K562 (cell line): ENCODE measurements at regions of chr5 and their contacts with region 1.

Region 1: DNA sequence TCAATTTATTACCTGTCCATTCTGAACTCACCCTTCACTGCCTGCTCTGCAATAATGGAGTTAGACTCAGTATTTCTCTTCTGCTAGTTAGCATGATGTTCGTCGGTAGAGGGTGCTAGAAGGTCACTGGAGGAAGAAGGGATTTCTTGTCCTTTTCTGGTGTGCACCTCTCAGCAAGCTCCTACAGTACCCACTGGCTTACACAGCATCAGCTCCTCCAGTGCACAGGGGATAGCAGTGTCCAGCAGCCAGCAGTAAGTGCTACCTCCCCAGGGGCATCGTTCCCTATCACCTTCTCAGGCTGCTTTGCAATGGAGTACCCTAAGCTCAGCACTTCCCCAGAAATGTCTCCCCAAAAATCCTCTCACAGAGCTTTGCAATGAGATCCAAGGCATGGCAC is 45.9 kb upstream of the APC start:
- DNase-seq: peak; percentile 44 to 82 (median 56)
- ATAC-seq: peak; percentile 86
- H3K4me3 ChIP-seq: no peak overlapping the region
- H3K27ac ChIP-seq: no peak overlapping the region
- H3K4me1 ChIP-seq: peaks cover 0 to 33% of the 10 kb centered on the region in 2 experiments; a peak in 3 of 5 replicates
- H3K27me3 ChIP-seq: no peaks in the 10 kb centered on the region
- CTCF ChIP-seq: peak; percentile 74 to 83 (median 79)
- EP300 ChIP-seq: no peak
- POLR2A ChIP-seq: no peak
- RAD21 ChIP-seq: peak; percentile 58 to 91

Region 2: DNA sequence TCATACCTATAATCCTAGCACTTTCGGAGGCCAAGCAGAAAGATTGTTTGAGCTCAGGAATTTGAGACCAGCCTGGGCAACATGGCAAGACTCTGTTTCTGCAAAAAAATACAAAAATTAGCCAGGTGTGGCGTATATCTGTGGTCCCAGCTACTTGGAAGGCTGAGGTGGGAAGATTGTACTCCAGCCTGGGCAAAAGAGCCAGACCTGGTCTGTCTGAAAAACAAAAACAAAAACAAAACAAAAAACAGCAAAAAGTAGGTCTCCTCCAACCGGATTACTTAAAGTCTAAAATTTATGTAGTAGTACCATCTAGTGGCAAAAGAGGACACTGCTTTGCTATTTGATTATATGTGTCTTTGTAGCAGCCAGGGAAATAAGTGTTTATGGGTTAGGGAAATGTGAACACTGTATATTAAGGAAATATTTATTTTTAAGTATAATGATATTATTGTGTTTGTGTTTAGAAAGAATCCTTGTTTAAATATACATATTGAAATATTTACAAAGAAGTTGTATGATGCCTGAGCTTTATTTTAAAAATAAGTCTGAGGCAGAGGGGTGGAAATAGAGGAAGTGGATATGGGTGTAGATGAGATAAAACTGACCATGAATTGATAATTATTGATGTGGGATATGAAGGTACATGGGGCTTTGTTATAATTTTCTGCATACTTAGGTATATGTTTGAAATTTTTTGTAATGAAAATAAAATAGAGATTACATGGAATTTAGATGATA is 65.9 kb after region 1 on chr5:
- CTCF ChIA-PET with region 1: interaction called, 20 read pairs
- POLR2A ChIA-PET with region 1: interaction called, 11 read pairs
- in situ Hi-C with region 1: loop called (anchors 5 kb)
- intact Hi-C with region 1: loop called (anchors 1 kb)
- DNase-seq: peak in 3 of 4 experiments; percentile 8 to 68 (median 31)
- ATAC-seq: peak; percentile 96
- H3K4me3 ChIP-seq: no peak overlapping the region
- H3K27ac ChIP-seq: no peak overlapping the region
- H3K4me1 ChIP-seq: no peaks in the 10 kb centered on the region
- H3K27me3 ChIP-seq: no peaks in the 10 kb centered on the region
- CTCF ChIP-seq: peak; percentile 60 to 84 (median 63)
- EP300 ChIP-seq: no peak
- POLR2A ChIP-seq: no peak
- RAD21 ChIP-seq: peak; percentile 95 to 97

Region 3: DNA sequence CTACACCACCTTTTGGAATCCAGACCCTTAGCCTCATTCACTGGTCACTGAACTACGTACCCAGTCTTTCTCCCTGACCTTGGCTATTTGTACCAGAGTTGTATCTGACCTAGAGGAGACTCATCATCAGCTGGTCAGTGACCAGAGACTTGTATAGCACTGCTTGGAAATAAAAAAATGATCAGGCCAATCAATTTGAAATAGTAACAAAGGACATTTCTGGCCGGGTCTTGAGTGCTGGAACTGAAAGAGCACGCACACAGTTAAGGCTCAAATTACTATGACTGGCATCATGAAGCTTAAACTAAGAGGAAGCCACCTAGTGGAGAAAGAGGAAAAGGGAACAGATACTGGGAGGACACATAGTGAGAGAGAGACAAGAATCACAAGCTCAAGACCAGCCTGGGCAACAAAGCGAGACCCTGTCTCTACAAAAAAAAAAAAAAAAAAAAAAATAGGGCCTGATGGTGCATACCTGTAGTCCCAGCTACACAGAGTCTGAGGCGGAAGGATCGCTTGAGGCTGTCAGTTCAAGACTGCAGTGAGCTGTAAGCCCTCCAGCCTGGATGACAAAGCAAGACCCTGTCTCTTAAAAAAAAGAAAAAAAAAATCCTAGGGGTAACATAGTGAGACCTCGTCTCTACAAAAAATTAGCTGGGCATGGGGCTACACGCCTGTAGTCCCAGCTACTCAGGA is 156.5 kb after region 1 on chr5:
- CTCF ChIA-PET with region 1: no interaction called
- POLR2A ChIA-PET with region 1: no interaction called
- in situ Hi-C with region 1: no loop called
- intact Hi-C with region 1: loop called (anchors 1 kb)
- DNase-seq: peak; percentile 33 to 80 (median 54)
- ATAC-seq: peak; percentile 99
- H3K4me3 ChIP-seq: no peak overlapping the region
- H3K27ac ChIP-seq: peak overlapping the region; percentile 4; the same call in 1 of the 3 replicates
- H3K4me1 ChIP-seq: peaks cover 0 to 4% of the 10 kb centered on the region in 2 experiments; a peak in 1 of 5 replicates
- H3K27me3 ChIP-seq: no peaks in the 10 kb centered on the region
- CTCF ChIP-seq: peak; percentile 55 to 78 (median 72); a peak in 5 of 6 replicates
- EP300 ChIP-seq: no peak
- POLR2A ChIP-seq: no peak
- RAD21 ChIP-seq: peak in 1 of 2 experiments; percentile 68; a peak in 2 of 4 replicates

Region 4: GRCh38 chr5:112860929-112861637 is 169.3 kb after region 1 on chr5 and contains the start of gene SRP19:
- CTCF ChIA-PET with region 1: no interaction called
- POLR2A ChIA-PET with region 1: no interaction called
- in situ Hi-C with region 1: no loop called
- intact Hi-C with region 1: loop called (anchors 5 kb)
- DNase-seq: peak; percentile 88 to 98 (median 92)
- ATAC-seq: peak; percentile 98
- H3K4me3 ChIP-seq: peak within 1 kb of the TSS; percentile 82
- H3K27ac ChIP-seq: peak within 1 kb of the TSS; percentile 81
- H3K4me1 ChIP-seq: peaks cover 0 to 12% of the 10 kb centered on the region in 2 experiments; a peak in 2 of 5 replicates
- H3K27me3 ChIP-seq: no peaks in the 10 kb centered on the region
- CTCF ChIP-seq: no peak
- EP300 ChIP-seq: peak; percentile 31; the same call in 1 of the 2 replicates
- POLR2A ChIP-seq: peak; percentile 86
- RAD21 ChIP-seq: peak in 1 of 2 experiments; percentile 1; a peak in 1 of 4 replicates
- polyA plus RNA-seq, gene SRP19: 287 to 357 TPM

Region 5: GRCh38 chr5:112921833-112922817 is 230.4 kb after region 1 on chr5 and contains the start of gene REEP5:
- CTCF ChIA-PET with region 1: no interaction called
- POLR2A ChIA-PET with region 1: no interaction called
- in situ Hi-C with region 1: no loop called
- intact Hi-C with region 1: loop called (anchors 5 kb)
- DNase-seq: peak; percentile 90 to 93 (median 92)
- ATAC-seq: peak; percentile 91
- H3K4me3 ChIP-seq: peak within 1 kb of the TSS; percentile 92
- H3K27ac ChIP-seq: peak within 1 kb of the TSS; percentile 89
- H3K4me1 ChIP-seq: peaks cover 18 to 20% of the 10 kb centered on the region in 2 experiments
- H3K27me3 ChIP-seq: no peaks in the 10 kb centered on the region
- CTCF ChIP-seq: peak; percentile 62 to 88 (median 79)
- EP300 ChIP-seq: no peak
- POLR2A ChIP-seq: peak; percentile 91
- RAD21 ChIP-seq: peak; percentile 72 to 86
- polyA plus RNA-seq, gene REEP5: 100 to 102 TPM

Region 6: DNA sequence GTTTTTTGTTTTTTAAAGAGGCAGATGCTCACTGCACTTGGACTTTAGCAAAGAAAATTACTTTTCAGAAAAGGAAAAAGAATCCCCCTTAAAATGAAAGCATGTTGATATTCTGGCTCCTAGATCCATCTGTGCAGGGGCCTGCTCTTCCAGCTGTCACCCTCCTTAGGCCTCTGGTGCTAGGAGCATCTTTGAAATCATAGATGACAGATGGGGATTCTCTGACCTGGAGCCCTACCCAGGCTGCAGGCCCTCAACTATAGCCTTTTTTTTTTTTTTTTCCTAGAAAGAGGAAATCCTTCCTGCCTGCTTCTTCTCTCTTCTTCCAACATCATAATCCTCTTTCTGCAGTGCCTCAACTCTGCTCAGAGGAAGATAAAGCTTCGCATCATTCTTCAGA is 268.6 kb after region 1 on chr5:
- CTCF ChIA-PET with region 1: no interaction called
- POLR2A ChIA-PET with region 1: no interaction called
- in situ Hi-C with region 1: no loop called
- intact Hi-C with region 1: loop called (anchors 5 kb)
- DNase-seq: no peak
- ATAC-seq: 0 out of 3 replicates have a peak, but pooled peaks have one; percentile 6
- H3K4me3 ChIP-seq: no peak overlapping the region
- H3K27ac ChIP-seq: no peak overlapping the region
- H3K4me1 ChIP-seq: peaks cover 5 to 17% of the 10 kb centered on the region in 2 experiments; a peak in 4 of 5 replicates
- H3K27me3 ChIP-seq: no peaks in the 10 kb centered on the region
- CTCF ChIP-seq: no peak
- EP300 ChIP-seq: no peak
- POLR2A ChIP-seq: no peak
- RAD21 ChIP-seq: no peak

Region 7: DNA sequence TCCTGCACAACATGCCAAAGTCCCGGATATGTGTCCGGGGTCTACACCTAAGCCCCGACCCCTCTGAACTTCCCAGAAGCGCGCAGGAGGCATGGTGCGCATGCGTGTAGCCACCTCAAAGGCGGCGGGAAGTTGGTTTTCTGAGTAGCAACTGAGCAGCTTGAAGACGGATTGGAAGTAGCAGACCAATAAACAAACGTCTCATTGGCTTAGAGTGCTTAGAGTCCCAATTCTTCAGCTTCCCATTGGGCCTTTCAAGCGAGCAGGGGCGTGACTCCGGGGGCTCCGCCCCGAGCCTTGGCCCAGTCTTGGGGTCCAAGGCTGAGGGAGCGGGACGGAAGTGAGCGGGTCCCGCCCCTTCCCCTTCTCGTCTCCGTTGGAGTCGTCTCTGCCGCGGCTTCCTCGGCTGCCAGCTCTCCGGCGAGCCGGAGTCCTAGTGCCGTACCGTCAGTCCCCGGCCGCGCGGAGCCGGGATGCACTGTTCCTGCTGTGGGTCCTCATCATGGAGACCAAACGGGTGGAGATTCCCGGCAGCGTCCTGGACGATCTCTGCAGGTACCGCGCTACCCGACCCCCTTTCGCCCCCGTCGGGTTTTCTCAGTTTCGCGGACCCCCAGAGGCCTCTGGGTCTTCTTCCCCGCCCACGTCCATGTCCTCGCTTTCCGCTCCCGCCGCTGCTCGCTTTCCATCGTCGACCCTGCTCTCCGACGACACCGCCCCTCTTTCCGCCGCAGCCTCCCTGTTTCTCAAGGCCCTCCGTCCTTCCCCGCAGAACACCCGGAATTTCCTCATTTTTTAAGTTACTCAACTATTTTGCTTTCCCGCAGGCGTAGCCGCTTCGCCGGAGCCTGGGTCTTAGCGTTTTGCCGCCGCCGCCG is 284.9 kb after region 1 on chr5 and contains the start of gene DCP2:
- CTCF ChIA-PET with region 1: no interaction called
- POLR2A ChIA-PET with region 1: no interaction called
- in situ Hi-C with region 1: no loop called
- intact Hi-C with region 1: loop called (anchors 5 kb)
- DNase-seq: peak; percentile 95 to 99 (median 98)
- ATAC-seq: peak; percentile 88
- H3K4me3 ChIP-seq: peak within 1 kb of the TSS; percentile 64
- H3K27ac ChIP-seq: peak within 1 kb of the TSS; percentile 86
- H3K4me1 ChIP-seq: peaks cover 17 to 36% of the 10 kb centered on the region in 2 experiments
- H3K27me3 ChIP-seq: no peaks in the 10 kb centered on the region
- CTCF ChIP-seq: no peak
- EP300 ChIP-seq: no peak; the same call in 1 of the 2 replicates
- POLR2A ChIP-seq: peak; percentile 97
- RAD21 ChIP-seq: no peak
- polyA plus RNA-seq, gene DCP2: 25.9 to 36.8 TPM